Activated T-helper 2 cell treated with anti-CD3 and anti-CD28 coated beads, Interferon-gamma antibody, Interleukin-2, Interleukin-4, amounts not matched to agents 10 μg/mL and 5 μg/mL and 100 μg/mL, durations not matched to agents 14 hours and 24 hours and 36 hours (primary cell): ENCODE measurements at regions of chr6 and their contacts with region 1.

Region 1: GRCh38 chr6:27795697-27796494 is 116.3 kb downstream of the OR2B2 start:
- DNase-seq: peak; percentile 48
- H3K4me3 Mint-ChIP-seq: no peak overlapping the region
- H3K27ac Mint-ChIP-seq: peak overlapping the region; percentile 8
- H3K4me1 Mint-ChIP-seq: peaks cover 47% of the 10 kb centered on the region
- H3K27me3 Mint-ChIP-seq: peaks cover 8% of the 10 kb centered on the region

Region 2: DNA sequence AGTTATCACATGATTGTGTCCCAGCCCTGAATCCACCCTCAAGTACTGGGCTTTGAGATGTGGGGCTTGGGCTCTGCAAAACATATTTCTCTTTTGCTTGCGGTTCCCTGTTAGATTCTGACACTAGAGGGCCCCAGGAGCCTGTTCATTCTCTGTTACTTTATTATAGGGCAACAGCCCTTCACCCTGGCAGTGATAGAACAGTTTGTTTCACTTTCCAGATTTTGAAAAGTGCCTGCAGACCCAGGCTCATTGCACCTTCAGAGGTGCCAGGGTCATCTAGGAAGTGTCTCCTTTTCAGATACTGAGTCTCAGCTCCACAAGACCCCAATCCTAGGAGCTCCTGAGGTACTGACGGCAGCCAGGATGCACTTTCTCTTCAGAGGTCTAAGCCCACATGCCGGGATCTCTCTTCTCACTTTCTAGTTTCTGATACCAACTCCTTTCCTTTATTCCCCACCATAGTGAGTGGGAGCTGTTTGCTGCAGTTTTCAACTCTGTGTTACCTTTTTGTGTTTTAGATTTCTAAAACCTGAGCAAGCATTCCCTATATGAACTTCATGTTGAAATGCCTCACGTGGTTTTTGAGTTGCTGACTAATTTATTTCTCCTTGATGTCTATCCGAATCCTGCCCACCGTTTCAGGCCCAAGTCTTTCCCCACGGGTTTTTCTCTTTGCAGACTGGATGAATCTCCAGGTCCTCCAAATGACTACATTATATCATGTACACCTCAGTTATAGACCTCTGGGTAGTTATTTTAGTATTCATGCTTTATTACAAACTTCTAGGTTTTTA is 1188.3 kb before region 1 on chr6:
- intact Hi-C with region 1: loop called (anchors 5 kb)
- DNase-seq: peak; percentile 51
- H3K4me3 Mint-ChIP-seq: peak overlapping the region; percentile 28
- H3K27ac Mint-ChIP-seq: no peak overlapping the region
- H3K4me1 Mint-ChIP-seq: peaks cover 16% of the 10 kb centered on the region
- H3K27me3 Mint-ChIP-seq: peaks cover 16% of the 10 kb centered on the region

Region 3: GRCh38 chr6:27518881-27519795 is 276.8 kb before region 1 on chr6:
- intact Hi-C with region 1: loop called (anchors 5 kb)
- DNase-seq: peak; percentile 30
- H3K4me3 Mint-ChIP-seq: peak overlapping the region; percentile 79
- H3K27ac Mint-ChIP-seq: peak overlapping the region; percentile 62
- H3K4me1 Mint-ChIP-seq: peaks cover 11% of the 10 kb centered on the region
- H3K27me3 Mint-ChIP-seq: peaks cover 30% of the 10 kb centered on the region

Region 4: GRCh38 chr6:27772261-27773001 is 23.5 kb before region 1 on chr6:
- intact Hi-C with region 1: loop called (anchors 1 kb)
- DNase-seq: peak; percentile 82
- H3K4me3 Mint-ChIP-seq: no peak overlapping the region
- H3K27ac Mint-ChIP-seq: peak overlapping the region; percentile 43
- H3K4me1 Mint-ChIP-seq: peaks cover 12% of the 10 kb centered on the region
- H3K27me3 Mint-ChIP-seq: peaks cover 20% of the 10 kb centered on the region

Region 5: DNA sequence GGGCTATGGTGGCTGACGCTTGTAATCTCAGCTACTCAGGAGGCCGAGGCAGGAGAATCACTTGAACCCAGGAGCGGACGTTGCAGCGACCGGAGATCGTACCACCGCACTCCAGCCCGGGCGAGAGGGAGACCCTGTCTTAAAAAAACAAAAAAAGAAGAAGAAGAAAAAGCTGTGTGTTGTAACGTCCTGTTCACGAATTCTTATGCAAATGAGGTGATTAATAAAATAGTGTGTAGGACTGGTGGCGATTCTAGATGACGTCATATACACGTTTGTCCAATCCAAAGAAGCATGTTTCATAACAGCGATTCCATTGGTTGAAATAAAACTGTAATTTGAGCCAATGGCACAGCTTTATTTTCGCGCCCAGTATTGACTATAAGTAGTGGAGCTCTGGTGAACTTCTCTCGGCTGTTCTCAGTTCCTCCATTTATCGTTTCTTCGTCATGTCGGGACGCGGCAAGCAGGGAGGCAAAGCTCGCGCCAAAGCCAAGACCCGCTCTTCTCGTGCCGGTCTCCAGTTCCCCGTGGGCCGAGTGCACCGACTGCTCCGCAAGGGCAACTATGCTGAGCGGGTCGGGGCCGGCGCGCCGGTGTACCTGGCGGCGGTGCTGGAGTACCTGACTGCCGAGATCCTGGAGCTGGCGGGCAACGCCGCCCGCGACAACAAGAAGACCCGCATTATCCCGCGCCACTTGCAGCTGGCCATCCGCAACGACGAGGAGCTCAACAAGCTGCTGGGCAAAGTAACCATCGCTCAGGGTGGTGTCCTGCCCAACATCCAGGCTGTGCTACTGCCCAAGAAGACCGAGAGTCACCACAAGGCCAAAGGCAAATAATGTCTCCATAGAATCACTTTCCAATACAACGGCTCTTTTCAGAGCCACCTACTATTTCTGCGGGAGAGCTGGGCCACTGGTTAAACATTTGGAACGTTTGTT is 69.3 kb after region 1 on chr6:
- intact Hi-C with region 1: no loop called
- DNase-seq: peak; percentile 83
- H3K4me3 Mint-ChIP-seq: peak overlapping the region; percentile 98
- H3K27ac Mint-ChIP-seq: peak overlapping the region; percentile 99
- H3K4me1 Mint-ChIP-seq: peaks cover 62% of the 10 kb centered on the region
- H3K27me3 Mint-ChIP-seq: no peaks in the 10 kb centered on the region